Heart left ventricle (tissue), 16 donors: ENCODE measurements at regions of chr19 and their contacts with region 1.

Region 1: DNA sequence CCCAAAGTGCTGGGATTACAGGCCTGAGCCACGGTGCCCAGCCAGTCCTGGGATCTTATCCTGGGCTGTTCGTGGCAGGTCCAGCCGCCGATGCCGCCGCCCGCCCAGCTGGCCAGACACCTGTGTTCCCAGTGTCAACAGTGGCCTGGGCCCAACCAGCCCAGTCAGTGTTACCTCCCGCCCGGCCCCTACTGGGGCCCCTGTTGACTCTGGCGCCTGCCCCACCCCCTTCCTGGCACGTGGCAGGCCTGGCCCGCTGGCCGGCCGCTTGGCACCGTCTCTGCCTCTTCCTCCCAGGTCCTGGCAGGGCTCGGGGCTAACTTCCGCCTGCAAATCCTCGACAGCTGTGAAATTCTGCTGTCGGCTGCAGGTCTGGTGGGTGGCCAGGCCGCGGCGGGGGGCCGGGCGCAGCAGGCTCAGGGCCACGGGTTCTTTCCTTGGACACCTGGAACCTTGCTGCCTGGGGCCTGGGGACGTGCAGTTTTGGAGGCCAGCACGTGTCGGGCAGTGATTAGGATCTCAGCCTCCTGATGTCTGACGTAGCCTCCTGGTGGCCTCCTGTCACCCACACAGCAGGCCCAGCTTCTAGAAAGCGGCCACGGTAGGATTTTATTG is 9.1 kb downstream of the ARID3A start:
- DNase-seq: peak; percentile 89 to 94 (median 92)
- ATAC-seq: peak; percentile 91 to 96 (median 92)
- H3K4me3 ChIP-seq: peak overlapping the region in 5 of 12 donors; percentile 8 to 19 (median 15)
- H3K27ac ChIP-seq: peak overlapping the region in 10 of 12 donors; percentile 39 to 79 (median 74)
- H3K4me1 ChIP-seq: peaks cover 4 to 46% (median 31%) of the 10 kb centered on the region in 12 donors
- H3K27me3 ChIP-seq: no peaks in the 10 kb centered on the region
- CTCF ChIP-seq: no peak
- POLR2A ChIP-seq: no peak

Region 2: DNA sequence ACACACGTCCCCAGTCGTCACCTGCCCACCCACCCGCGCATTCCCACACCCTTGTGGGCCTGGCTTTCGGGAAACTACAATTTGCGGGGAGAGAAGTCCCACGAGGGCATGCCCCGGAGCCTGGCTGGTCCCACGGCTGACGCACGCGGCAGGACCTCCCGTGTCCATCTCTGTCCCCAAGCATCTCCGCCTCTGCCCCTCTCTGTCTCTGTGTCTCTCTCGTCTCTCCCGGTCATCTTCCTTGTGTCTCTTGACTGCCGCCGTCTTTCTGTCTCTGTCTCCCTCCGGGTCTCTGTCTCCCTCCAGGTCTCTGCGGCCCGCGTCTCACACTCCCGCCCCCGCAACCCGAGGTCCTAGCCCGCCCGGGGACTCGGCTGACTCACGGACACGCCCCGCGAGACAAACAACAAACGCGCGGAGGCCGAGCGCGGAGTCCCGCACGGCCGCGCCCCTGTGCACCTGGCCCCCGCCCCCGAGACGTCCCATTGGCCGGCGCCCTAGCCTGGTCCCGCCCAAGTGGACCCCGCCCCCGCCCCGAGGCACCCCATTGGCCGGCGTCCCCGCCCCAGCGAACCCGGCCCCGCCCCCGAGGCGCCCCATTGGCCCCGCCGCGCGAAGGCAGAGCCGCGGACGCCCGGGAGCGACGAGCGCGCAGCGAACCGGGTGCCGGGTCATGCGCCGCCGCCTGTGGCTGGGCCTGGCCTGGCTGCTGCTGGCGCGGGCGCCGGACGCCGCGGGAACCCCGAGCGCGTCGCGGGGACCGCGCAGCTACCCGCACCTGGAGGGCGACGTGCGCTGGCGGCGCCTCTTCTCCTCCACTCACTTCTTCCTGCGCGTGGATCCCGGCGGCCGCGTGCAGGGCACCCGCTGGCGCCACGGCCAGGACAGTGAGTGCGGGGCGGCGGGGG is 295.5 kb before region 1 on chr19 and contains the start of gene FGF22:
- intact Hi-C with region 1: no loop called
- DNase-seq: peak; percentile 93 to 96 (median 93)
- ATAC-seq: peak; percentile 68 to 95 (median 92)
- H3K4me3 ChIP-seq: peak within 1 kb of the TSS in 11 of 12 donors; percentile 18 to 60 (median 53)
- H3K27ac ChIP-seq: peak within 1 kb of the TSS in 3 of 12 donors; percentile 38 to 60 (median 41)
- H3K4me1 ChIP-seq: peaks cover 0 to 14% (median 10%) of the 10 kb centered on the region in 12 donors
- H3K27me3 ChIP-seq: peaks cover 0 to 6% (median 0%) of the 10 kb centered on the region in 9 donors
- CTCF ChIP-seq: no peak
- POLR2A ChIP-seq: no peak
- total RNA-seq, gene FGF22: 0.16 to 0.36 (median 0.20) TPM in 3 of 9 donors, not detected in the others

Region 3: DNA sequence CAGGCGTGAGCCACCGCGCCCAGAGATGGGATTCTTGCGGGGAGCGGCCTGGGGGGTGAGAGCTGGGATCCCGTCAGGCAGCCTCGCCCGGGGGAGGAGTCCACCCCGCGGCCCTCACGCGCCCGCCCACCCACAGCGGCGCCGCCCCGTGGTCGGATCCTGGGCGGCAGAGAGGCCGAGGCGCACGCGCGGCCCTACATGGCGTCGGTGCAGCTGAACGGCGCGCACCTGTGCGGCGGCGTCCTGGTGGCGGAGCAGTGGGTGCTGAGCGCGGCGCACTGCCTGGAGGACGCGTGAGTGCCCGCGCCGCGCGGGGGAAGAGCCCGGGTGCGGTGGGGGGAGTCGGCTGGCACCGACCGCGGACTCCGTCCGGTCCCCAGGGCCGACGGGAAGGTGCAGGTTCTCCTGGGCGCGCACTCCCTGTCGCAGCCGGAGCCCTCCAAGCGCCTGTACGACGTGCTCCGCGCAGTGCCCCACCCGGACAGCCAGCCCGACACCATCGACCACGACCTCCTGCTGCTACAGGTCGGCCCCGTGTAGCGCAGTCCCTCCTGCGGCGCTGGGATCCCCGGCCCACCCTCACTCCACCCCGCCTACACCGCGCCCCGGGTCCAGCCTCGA is 74.4 kb before region 1 on chr19:
- intact Hi-C with region 1: no loop called
- DNase-seq: peak in 4 of 5 donors; percentile 77 to 82 (median 79)
- ATAC-seq: peak in 3 of 4 donors; percentile 52 to 67 (median 65)
- H3K4me3 ChIP-seq: peak overlapping the region; percentile 13 to 59 (median 44)
- H3K27ac ChIP-seq: peak overlapping the region in 7 of 12 donors; percentile 31 to 80 (median 75)
- H3K4me1 ChIP-seq: peaks cover 0 to 42% (median 4%) of the 10 kb centered on the region in 12 donors
- H3K27me3 ChIP-seq: peaks cover 0 to 48% (median 17%) of the 10 kb centered on the region in 9 donors
- CTCF ChIP-seq: peak in 6 of 12 donors; percentile 13 to 39 (median 22)
- POLR2A ChIP-seq: no peak

Region 4: GRCh38 chr19:979318-979741 is 44.4 kb after region 1 on chr19:
- intact Hi-C with region 1: loop called in 1 of 10 experiments (anchors 5 kb)
- DNase-seq: no peak
- ATAC-seq: no peak
- H3K4me3 ChIP-seq: no peak overlapping the region
- H3K27ac ChIP-seq: no peak overlapping the region
- H3K4me1 ChIP-seq: peaks cover 3 to 26% (median 13%) of the 10 kb centered on the region in 12 donors
- H3K27me3 ChIP-seq: no peaks in the 10 kb centered on the region
- CTCF ChIP-seq: no peak
- POLR2A ChIP-seq: no peak